ENCODE measurements at regions of chr9 and their contacts with region 1.

Region 1: DNA sequence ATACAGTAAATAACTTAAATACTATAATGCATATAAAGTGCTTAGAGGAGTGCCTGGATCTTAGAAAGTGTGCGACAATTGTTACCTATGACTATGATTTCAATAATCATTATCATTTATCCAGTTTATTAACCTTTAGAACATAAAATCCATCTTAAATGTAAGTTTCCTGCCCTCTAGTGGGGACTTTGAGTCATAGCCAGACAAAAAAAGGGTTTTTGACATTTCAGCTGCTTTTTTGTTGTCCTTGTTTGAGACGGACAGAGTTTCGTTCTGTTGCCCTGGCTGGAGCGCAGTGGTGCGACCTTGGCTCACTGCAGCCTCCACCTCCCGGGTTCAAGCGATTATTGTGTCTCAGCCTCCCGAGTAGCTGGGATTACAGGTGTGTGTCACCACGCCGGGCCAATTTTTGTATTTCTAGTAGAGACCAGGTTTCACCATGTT is 9.7 kb upstream of the C9orf152 start:
- DNase-seq: no peak
- H3K4me3 ChIP-seq: no peak overlapping the region
- H3K4me3 Mint-ChIP-seq: no peak overlapping the region
- H3K27ac Mint-ChIP-seq: no peak overlapping the region
- H3K4me1 ChIP-seq: peaks cover 80% of the 10 kb centered on the region
- H3K4me1 Mint-ChIP-seq: peaks cover 47% of the 10 kb centered on the region
- H3K27me3 ChIP-seq: no peaks in the 10 kb centered on the region
- H3K27me3 Mint-ChIP-seq: no peaks in the 10 kb centered on the region
- CTCF ChIP-seq: peak; percentile 61 to 63

Region 2: DNA sequence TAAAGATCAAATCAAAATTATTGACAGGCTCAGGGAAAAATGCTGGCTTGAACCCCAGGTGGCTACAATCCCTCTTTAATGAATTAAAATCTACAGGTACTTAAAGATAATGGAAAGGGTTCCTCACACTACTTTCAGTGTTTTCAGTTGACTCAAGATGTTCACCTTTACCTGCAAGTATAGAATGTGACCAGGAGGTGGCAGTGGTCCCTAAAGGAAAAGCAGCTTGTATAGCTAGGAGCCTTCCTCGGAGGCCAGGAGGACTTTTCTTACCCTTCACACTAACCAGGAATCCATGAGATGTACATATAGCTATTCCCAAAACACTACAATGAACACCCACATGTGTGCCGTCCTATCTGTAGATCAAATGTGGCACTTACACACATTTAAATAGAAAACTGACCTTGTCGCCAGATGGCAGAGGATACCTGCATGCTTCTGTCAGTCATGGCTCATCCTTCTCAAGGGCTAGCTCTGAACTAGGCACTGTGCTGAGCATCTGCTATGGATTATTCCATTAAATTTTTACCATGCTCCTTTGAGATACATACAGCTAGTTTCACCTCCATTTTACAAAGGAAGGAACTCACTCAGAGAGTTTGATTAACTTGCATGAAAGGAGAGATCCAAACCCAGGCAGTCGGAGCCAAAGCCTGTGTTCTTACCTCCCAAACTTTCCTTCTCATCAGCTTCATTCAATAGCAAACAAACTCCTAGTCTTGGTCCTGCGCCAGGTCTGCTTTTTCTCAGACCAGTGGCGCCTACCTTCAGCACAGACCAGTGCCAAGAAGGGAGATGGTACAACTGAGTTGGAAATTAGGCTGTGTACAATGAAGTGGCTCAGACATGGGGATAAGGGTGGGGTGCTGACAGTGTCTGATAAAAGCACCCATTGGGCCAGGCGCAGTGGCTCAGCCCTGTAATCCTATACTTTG is 34.2 kb before region 1 on chr9:
- CTCF ChIA-PET with region 1: interaction called, 23 read pairs
- POLR2A ChIA-PET with region 1: no interaction called
- intact Hi-C with region 1: loop called (anchors 1 kb)
- DNase-seq: peak; percentile 79 to 81
- H3K4me3 ChIP-seq: no peak overlapping the region
- H3K4me3 Mint-ChIP-seq: no peak overlapping the region
- H3K27ac Mint-ChIP-seq: no peak overlapping the region
- H3K4me1 ChIP-seq: no peaks in the 10 kb centered on the region
- H3K4me1 Mint-ChIP-seq: no peaks in the 10 kb centered on the region
- H3K27me3 ChIP-seq: no peaks in the 10 kb centered on the region
- H3K27me3 Mint-ChIP-seq: no peaks in the 10 kb centered on the region
- CTCF ChIP-seq: peak; percentile 70 to 87

Region 3: GRCh38 chr9:110192531-110193261 is 25.0 kb before region 1 on chr9:
- CTCF ChIA-PET with region 1: no interaction called
- POLR2A ChIA-PET with region 1: no interaction called
- intact Hi-C with region 1: loop called (anchors 1 kb)
- DNase-seq: no peak
- H3K4me3 ChIP-seq: no peak overlapping the region
- H3K4me3 Mint-ChIP-seq: no peak overlapping the region
- H3K27ac Mint-ChIP-seq: peak overlapping the region; percentile 77
- H3K4me1 ChIP-seq: peaks cover 36% of the 10 kb centered on the region
- H3K4me1 Mint-ChIP-seq: peaks cover 22% of the 10 kb centered on the region
- H3K27me3 ChIP-seq: no peaks in the 10 kb centered on the region
- H3K27me3 Mint-ChIP-seq: no peaks in the 10 kb centered on the region
- CTCF ChIP-seq: no peak

Region 4: DNA sequence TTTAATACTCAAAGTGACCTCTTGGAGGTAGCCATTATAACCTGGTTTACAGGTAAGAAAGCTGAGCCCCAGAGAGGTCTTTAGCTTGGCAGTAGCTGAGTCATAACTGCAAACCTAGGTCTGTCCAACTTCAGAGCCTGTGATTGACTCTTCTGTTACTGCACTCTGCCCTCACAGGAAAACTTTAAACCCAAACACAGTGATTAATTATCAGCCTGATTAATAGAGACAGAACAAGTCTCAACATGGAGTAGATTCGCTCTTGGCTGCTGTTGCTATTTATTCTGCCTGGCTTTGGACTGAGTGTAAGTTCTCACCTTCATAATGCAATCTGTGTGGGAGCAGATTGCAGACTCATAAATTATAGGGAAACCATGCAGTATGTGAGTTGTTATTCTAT is 66.1 kb after region 1 on chr9:
- CTCF ChIA-PET with region 1: no interaction called
- POLR2A ChIA-PET with region 1: no interaction called
- intact Hi-C with region 1: loop called (anchors 2 kb)
- DNase-seq: peak in 1 of 2 experiments; percentile 54
- H3K4me3 ChIP-seq: no peak overlapping the region
- H3K4me3 Mint-ChIP-seq: no peak overlapping the region
- H3K27ac Mint-ChIP-seq: no peak overlapping the region
- H3K4me1 ChIP-seq: peaks cover 40% of the 10 kb centered on the region
- H3K4me1 Mint-ChIP-seq: peaks cover 19% of the 10 kb centered on the region
- H3K27me3 ChIP-seq: no peaks in the 10 kb centered on the region
- H3K27me3 Mint-ChIP-seq: no peaks in the 10 kb centered on the region
- CTCF ChIP-seq: no peak

Region 5: GRCh38 chr9:110298043-110298605 is 80.4 kb after region 1 on chr9:
- CTCF ChIA-PET with region 1: interaction called, 3 read pairs
- POLR2A ChIA-PET with region 1: no interaction called
- intact Hi-C with region 1: loop called (anchors 1 kb)
- DNase-seq: peak; percentile 74 to 76
- H3K4me3 ChIP-seq: no peak overlapping the region
- H3K4me3 Mint-ChIP-seq: peak overlapping the region; percentile 45
- H3K27ac Mint-ChIP-seq: peak overlapping the region; percentile 54
- H3K4me1 ChIP-seq: peaks cover 24% of the 10 kb centered on the region
- H3K4me1 Mint-ChIP-seq: peaks cover 21% of the 10 kb centered on the region
- H3K27me3 ChIP-seq: no peaks in the 10 kb centered on the region
- H3K27me3 Mint-ChIP-seq: no peaks in the 10 kb centered on the region
- CTCF ChIP-seq: no peak

Measured in Caco-2 (cell line).